ENCODE measurements at regions of chr1 and their contacts with region 1.

Region 1: DNA sequence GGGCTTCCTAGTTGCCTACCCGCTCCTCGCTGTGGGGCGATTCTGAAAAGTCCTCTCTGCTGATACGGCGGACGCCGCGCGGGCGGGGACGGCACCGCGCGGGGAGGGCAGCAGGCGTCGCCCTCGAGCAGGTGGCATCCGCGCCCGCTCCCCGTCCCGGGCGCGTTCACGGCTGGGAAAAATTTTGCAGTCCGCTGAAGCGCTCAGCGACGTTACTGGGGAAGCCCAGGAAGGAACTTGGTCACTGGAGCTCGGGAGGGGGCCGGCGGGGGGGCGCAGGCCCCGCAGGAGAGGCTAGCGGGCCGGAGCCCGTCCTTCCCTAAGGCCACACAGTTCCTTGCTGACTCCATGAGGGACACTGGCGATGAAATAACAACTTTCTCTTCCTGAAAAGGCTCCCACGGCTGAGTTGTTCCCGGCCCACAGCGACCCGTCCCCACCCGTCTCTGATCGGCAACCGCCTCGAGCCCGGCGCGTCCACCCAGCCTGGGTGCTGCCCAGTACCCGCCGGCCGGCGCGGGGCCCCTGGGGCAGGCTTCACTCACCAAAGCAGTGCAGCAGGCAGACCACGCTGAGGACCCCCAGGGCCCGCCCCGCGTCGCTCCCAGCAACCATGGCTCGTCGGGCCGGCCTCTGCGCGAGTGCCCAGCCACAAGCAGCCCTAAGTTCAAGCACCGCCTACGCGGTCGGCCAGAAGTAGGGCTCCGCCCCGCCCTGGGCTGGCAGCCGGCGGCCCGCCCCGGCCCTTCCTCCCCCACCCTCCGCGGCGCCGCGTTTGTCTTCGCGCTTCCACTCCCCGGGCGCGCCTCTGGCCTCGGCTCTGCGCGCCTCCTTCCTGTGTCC is at the start of gene CD58:
- DNase-seq: peak; percentile 94
- ATAC-seq: peak; percentile 84
- H3K4me3 Mint-ChIP-seq: peak within 1 kb of the TSS; percentile 91
- H3K27ac Mint-ChIP-seq: peak within 1 kb of the TSS; percentile 88
- H3K4me1 Mint-ChIP-seq: peaks cover 55% of the 10 kb centered on the region
- H3K27me3 Mint-ChIP-seq: peaks cover 8% of the 10 kb centered on the region
- CTCF ChIP-seq: peak; percentile 85
- total RNA-seq, gene CD58: 11.1 to 12.7 TPM

Region 2: DNA sequence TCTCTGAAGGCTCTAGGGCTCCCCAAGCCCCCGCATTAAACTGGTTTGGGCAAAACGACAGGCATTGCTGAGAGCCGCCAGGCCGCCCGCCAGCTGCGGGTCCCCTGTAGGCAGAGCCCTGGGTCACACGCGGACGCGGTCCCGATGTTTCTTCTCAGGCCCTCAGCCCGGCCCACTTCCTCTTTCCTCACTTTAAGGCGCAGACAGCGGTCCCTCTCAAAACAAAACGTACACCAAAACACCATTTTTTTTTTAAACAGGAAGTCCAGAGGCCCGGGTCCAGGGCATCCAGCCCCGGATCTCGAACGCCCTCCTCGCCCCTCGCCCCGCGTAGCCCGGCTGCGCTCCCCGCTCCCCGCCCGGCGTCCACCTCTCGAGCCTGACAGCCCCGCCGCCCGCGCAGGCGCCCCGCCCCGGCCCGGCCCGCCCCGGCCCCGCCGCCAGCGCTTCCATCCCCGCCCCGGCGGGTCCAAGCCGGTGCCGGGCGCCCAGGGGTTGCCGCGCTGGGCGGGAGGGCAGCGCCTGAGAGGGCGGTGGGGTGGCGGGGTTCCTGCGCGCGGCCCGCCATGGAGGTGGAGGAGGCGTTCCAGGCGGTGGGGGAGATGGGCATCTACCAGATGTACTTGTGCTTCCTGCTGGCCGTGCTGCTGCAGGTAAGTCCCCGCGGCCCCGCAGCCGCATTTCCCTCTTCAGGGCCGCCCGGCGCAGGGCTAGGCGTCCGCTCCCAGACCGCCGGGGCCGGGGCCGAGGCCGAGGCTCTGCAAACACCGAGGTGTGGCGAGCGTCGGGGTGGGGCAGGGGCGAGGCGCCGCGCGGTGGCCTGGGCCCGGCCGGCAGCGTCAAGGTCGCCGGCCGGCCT is 594.3 kb before region 1 on chr1 and contains the start of gene SLC22A15:
- CTCF ChIA-PET with region 1: no interaction called
- POLR2A ChIA-PET with region 1: no interaction called
- intact Hi-C with region 1: no loop called
- DNase-seq: peak; percentile 60
- ATAC-seq: peak; percentile 70
- H3K4me3 Mint-ChIP-seq: peak within 1 kb of the TSS; percentile 84
- H3K27ac Mint-ChIP-seq: peak within 1 kb of the TSS; percentile 46
- H3K4me1 Mint-ChIP-seq: peaks cover 8% of the 10 kb centered on the region
- H3K27me3 Mint-ChIP-seq: peaks cover 41% of the 10 kb centered on the region
- CTCF ChIP-seq: no peak
- total RNA-seq, gene SLC22A15: 0.07 to 0.25 TPM

Region 3: DNA sequence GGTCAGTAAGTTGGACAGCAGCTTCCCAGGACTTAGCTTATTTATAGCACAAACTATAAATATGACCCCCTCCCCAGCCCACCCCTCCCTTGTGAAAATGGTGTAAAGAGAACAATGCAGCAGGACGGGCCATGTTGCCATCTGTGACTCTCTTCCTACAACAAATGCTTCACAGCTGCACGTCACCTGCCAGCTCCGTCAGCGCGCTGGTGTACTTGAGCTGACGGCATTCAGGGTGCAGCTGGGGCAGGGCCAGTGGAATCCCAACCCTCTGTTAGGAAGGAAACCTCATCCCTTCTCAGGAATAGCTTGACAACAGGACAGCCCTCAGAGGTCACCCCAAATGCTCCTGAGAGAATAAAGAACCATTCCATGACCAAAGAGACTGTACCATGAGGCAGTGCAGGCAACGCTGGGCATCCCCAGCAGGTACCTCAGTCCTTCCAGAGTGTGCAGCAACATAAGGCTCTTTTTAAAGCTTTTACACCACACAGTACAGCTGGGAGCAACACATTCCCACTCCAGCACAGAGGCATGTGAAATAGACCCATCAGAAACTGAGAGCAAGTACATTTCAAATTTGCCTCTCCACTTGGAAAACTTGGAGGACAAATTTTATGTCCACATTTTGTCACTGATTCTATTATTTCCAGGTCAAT is 112.5 kb before region 1 on chr1:
- CTCF ChIA-PET with region 1: no interaction called
- POLR2A ChIA-PET with region 1: no interaction called
- intact Hi-C with region 1: no loop called
- DNase-seq: no peak
- ATAC-seq: no peak
- H3K4me3 Mint-ChIP-seq: no peak overlapping the region
- H3K27ac Mint-ChIP-seq: no peak overlapping the region
- H3K4me1 Mint-ChIP-seq: no peaks in the 10 kb centered on the region
- H3K27me3 Mint-ChIP-seq: no peaks in the 10 kb centered on the region
- CTCF ChIP-seq: no peak

Region 4: GRCh38 chr1:116586741-116587143 is 16.2 kb after region 1 on chr1:
- CTCF ChIA-PET with region 1: interaction called, 19 read pairs
- POLR2A ChIA-PET with region 1: interaction called, 3 read pairs
- intact Hi-C with region 1: no loop called
- DNase-seq: no peak
- ATAC-seq: no peak
- H3K4me3 Mint-ChIP-seq: no peak overlapping the region
- H3K27ac Mint-ChIP-seq: no peak overlapping the region
- H3K4me1 Mint-ChIP-seq: peaks cover 7% of the 10 kb centered on the region
- H3K27me3 Mint-ChIP-seq: no peaks in the 10 kb centered on the region
- CTCF ChIP-seq: no peak

Region 5: DNA sequence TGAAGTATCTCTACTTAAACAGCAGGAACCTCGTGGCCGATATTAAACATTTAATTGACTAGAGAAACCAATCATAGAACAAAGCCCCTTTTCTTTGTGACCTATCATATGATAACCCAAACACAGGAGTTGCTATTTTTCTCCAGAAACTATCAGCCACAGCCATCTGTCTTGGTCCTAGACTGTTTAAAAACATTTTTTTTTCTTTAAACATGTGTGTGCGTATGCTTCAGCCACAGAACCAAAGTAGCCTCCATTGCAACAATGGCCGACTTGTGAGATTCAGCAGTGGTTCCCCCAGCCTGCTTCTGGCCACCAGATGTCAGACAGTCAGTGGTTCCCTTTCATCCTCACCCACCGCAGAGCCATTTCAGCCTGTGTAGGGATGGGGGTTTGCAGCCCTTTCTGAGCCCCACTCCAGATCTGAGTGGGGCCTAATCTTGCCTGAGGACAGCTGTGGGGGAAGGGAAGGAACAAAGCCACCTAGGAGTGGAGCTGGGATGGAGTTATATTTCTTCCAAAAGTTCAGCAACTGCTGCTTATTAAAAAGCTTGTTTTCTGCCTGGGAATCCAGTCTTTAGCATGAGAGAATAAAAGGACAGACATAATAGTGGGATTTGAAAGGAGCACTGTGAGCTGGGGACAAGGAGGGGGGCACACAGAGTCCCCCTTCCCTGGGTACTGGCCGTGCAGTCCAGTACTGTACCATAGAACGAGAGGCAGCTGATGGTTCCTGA is 108.7 kb after region 1 on chr1:
- CTCF ChIA-PET with region 1: interaction called, 5 read pairs
- POLR2A ChIA-PET with region 1: no interaction called
- intact Hi-C with region 1: loop called (anchors 5 kb)
- DNase-seq: no peak
- ATAC-seq: no peak
- H3K4me3 Mint-ChIP-seq: no peak overlapping the region
- H3K27ac Mint-ChIP-seq: no peak overlapping the region
- H3K4me1 Mint-ChIP-seq: no peaks in the 10 kb centered on the region
- H3K27me3 Mint-ChIP-seq: peaks cover 16% of the 10 kb centered on the region
- CTCF ChIP-seq: no peak

Region 6: GRCh38 chr1:116817582-116818064 is 247.0 kb after region 1 on chr1:
- CTCF ChIA-PET with region 1: no interaction called
- POLR2A ChIA-PET with region 1: no interaction called
- intact Hi-C with region 1: loop called (anchors 5 kb)
- DNase-seq: peak; percentile 80
- ATAC-seq: peak; percentile 67
- H3K4me3 Mint-ChIP-seq: peak overlapping the region; percentile 52
- H3K27ac Mint-ChIP-seq: peak overlapping the region; percentile 96
- H3K4me1 Mint-ChIP-seq: peaks cover 52% of the 10 kb centered on the region
- H3K27me3 Mint-ChIP-seq: no peaks in the 10 kb centered on the region
- CTCF ChIP-seq: peak; percentile 95

Measured in activated CD8-positive, alpha-beta T cell treated with anti-CD3 and anti-CD28 coated beads for 36 hours (primary cell).